Panc1 (cell line): ENCODE measurements at regions of chr4 and their contacts with region 1.

Region 1: DNA sequence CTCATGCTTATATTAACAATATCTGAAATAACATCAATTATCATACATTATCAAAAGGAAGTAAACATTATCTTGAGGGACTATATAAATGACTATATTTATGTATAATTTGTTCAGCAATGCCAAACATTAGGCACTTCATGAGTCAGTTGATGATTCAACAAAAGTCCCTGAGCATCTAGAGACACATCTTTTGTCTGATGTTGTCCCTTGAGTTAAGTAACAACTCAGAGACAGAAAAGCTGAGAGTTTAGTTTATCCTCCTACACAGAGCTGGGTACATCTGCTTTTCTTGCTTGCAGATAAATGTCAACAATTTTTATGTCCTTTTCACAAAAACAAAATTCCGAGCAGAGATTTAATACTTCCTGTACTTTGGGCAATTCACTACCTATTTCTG is 311.1 kb downstream of the INPP4B start:
- DNase-seq: no peak
- ATAC-seq: no peak
- H3K4me3 ChIP-seq: no peak overlapping the region
- H3K27ac ChIP-seq: no peak overlapping the region
- H3K4me1 ChIP-seq: no peaks in the 10 kb centered on the region
- H3K27me3 ChIP-seq: no peaks in the 10 kb centered on the region
- CTCF ChIP-seq: no peak

Region 2: DNA sequence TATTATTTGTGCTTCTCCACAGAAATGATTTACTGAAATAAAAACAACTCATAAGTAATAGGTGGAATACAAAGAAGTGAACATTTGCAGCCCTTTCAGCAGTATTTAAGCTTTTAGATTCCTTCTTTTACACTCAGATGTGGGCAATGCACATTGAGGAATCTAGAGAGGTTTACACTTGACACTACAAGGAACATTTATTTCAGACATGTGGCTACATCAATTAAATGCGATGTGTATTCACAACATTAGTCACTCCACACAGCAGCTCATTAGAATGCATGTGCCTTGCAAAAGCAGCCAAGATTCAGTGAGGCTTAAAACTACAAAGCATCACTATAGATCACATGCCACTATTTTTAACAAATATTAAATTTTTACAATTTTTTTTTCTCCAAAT is 169.6 kb before region 1 on chr4:
- CTCF ChIA-PET with region 1: no interaction called
- POLR2A ChIA-PET with region 1: no interaction called
- in situ Hi-C with region 1: no loop called
- intact Hi-C with region 1: no loop called
- DNase-seq: no peak
- ATAC-seq: no peak
- H3K4me3 ChIP-seq: no peak overlapping the region
- H3K27ac ChIP-seq: no peak overlapping the region
- H3K4me1 ChIP-seq: peaks cover 4% of the 10 kb centered on the region
- H3K27me3 ChIP-seq: no peaks in the 10 kb centered on the region
- CTCF ChIP-seq: no peak

Region 3: GRCh38 chr4:142405021-142405694 is 129.9 kb before region 1 on chr4:
- CTCF ChIA-PET with region 1: no interaction called
- POLR2A ChIA-PET with region 1: interaction called, 14 read pairs
- in situ Hi-C with region 1: no loop called
- intact Hi-C with region 1: no loop called
- DNase-seq: no peak
- ATAC-seq: peak; percentile 70
- H3K4me3 ChIP-seq: peak overlapping the region; percentile 43 to 70
- H3K27ac ChIP-seq: peak overlapping the region; percentile 92
- H3K4me1 ChIP-seq: peaks cover 25% of the 10 kb centered on the region
- H3K27me3 ChIP-seq: no peaks in the 10 kb centered on the region
- CTCF ChIP-seq: no peak